ENCODE measurements at regions of chr18 and their contacts with region 1.

Region 1: DNA sequence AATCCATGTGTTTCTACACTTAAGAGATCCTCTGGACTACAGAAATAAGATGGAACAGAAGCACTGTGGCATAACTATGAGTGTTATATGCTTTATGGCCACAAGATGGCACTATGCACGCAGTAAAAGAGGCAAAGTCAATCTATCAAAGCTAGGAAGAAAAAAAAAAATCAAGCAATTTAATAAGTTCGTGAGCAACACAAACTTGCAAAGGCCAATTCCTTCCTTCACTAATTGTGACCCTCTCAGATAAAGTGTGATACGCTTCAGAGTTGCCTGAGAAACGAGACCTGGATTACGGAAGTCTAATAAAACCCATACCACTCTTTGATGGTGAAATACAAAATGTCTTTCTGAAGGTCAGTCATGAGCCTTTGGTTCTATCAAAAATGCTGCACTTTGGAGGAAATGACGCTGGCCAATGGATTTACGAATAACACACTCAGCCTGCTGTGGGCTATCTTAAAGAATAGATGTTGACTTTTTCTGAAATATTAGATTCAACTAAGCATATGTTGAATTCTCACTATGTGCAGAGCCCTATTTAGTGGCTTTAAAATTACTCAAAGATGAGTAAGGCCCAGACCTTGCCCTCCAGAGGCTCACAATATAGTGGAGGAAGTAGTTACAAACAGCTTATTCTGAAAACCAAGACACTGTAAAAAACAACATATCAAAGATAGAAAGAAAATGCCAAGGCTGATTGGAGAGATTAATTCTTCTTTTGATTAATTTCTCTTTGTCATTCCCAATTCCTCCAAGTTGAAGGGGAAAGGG is 35.5 kb upstream of the TTR start:
- DNase-seq: peak; percentile 14 to 23
- H3K4me3 ChIP-seq: no peak overlapping the region
- H3K27ac ChIP-seq: no peak overlapping the region
- H3K4me1 ChIP-seq: no peaks in the 10 kb centered on the region
- H3K27me3 ChIP-seq: no peaks in the 10 kb centered on the region
- CTCF ChIP-seq: peak; percentile 50 to 89 (median 71)
- POLR2A ChIP-seq: no peak

Region 2: GRCh38 chr18:31490387-31490786 is 65.8 kb before region 1 on chr18:
- intact Hi-C with region 1: no loop called
- DNase-seq: no peak
- H3K4me3 ChIP-seq: no peak overlapping the region
- H3K27ac ChIP-seq: no peak overlapping the region
- H3K4me1 ChIP-seq: no peaks in the 10 kb centered on the region
- H3K27me3 ChIP-seq: no peaks in the 10 kb centered on the region
- CTCF ChIP-seq: no peak
- POLR2A ChIP-seq: no peak

Region 3: DNA sequence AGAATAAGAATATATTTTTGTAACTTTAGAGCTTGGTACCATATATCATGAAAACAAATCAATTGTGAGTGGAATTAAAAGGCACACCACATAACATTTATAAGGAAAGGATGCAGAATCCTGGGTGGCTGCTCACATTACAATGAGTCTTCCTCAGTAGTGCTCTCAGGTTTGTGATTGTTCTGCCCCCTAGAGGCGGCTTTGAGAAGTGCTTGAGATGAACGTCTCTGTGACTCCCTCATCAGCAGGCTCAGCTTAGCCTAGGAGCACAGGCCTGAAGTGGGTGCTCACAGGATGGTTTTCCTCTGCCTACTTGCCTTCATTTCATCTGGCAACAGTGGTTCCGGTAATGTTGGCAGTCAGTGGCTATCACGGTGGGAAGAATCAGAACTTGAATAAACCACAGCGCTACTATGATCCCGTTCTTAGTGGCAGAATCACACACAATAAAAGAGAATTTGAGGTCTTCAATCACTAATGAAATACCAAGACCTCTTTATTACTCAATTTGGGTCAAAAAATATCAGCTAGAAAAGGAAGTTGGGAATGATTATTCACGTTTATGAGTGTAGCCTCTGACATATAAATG is 166.3 kb after region 1 on chr18:
- intact Hi-C with region 1: loop called (anchors 10 kb)
- DNase-seq: peak; percentile 80 to 84
- H3K4me3 ChIP-seq: no peak overlapping the region
- H3K27ac ChIP-seq: no peak overlapping the region
- H3K4me1 ChIP-seq: peaks cover 0 to 4% of the 10 kb centered on the region in 2 donors
- H3K27me3 ChIP-seq: no peaks in the 10 kb centered on the region
- CTCF ChIP-seq: peak; percentile 60 to 83 (median 68)
- POLR2A ChIP-seq: no peak

Region 4: DNA sequence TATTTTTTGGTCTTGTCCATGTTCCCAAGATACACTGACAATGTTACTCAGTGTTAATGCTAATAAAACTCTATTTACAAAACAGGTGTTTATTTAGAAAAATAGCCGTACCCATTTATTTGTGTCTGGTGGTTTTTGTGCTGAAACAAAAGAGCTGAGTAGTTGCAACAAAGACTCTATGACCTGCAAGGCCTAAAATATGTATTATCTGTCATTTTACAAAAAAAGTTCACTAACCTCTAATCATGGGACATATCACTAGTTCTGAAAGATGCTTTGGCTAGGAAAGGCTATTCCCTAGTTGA is 263.7 kb after region 1 on chr18:
- intact Hi-C with region 1: loop called (anchors 10 kb)
- DNase-seq: no peak
- H3K4me3 ChIP-seq: no peak overlapping the region
- H3K27ac ChIP-seq: no peak overlapping the region
- H3K4me1 ChIP-seq: no peaks in the 10 kb centered on the region
- H3K27me3 ChIP-seq: no peaks in the 10 kb centered on the region
- CTCF ChIP-seq: no peak
- POLR2A ChIP-seq: no peak

Region 5: GRCh38 chr18:31835528-31836133 is 279.5 kb after region 1 on chr18:
- intact Hi-C with region 1: no loop called
- DNase-seq: no peak
- H3K4me3 ChIP-seq: no peak overlapping the region
- H3K27ac ChIP-seq: no peak overlapping the region
- H3K4me1 ChIP-seq: no peaks in the 10 kb centered on the region
- H3K27me3 ChIP-seq: no peaks in the 10 kb centered on the region
- CTCF ChIP-seq: no peak
- POLR2A ChIP-seq: no peak

Region 6: DNA sequence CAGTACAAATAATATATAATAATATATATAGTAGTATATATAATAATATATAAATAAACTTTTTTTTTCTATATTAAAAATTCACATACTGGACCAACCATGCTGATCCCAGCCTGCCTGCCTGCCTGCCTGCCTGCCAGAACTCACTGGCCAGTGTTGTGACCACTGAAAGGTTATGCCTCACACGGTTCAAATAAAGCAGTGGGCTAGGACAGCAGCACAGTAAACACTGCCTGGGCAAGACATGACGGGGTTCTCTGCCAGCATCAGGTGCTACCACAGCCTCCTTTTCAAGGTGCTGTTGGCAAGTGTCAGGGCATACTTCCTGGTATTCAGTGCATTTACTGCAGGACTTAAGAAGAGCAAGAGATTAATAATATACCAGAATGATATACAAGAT is 319.1 kb after region 1 on chr18:
- intact Hi-C with region 1: no loop called
- DNase-seq: no peak
- H3K4me3 ChIP-seq: no peak overlapping the region
- H3K27ac ChIP-seq: no peak overlapping the region
- H3K4me1 ChIP-seq: no peaks in the 10 kb centered on the region
- H3K27me3 ChIP-seq: no peaks in the 10 kb centered on the region
- CTCF ChIP-seq: no peak
- POLR2A ChIP-seq: no peak

Region 7: DNA sequence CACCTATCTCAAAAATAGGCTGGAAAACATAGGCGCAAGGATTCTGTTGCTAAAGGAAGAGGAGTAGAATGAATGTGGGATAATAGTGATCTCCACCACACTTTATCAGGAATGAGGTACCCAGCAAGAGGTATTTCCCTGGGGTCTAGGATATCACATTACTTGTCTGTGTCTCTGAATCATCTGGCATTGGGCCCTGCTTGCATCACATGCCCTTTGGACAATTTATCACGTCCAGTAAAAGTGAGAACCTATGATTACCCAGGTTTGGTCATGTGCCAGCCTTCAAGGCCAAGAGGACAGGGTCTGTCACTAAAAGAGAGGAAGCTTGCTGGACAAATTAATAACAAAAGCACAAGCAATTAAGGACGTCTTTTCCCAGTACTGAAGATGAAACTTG is 398.2 kb after region 1 on chr18:
- intact Hi-C with region 1: no loop called
- DNase-seq: no peak
- H3K4me3 ChIP-seq: no peak overlapping the region
- H3K27ac ChIP-seq: no peak overlapping the region
- H3K4me1 ChIP-seq: no peaks in the 10 kb centered on the region
- H3K27me3 ChIP-seq: no peaks in the 10 kb centered on the region
- CTCF ChIP-seq: no peak
- POLR2A ChIP-seq: no peak

Region 8: GRCh38 chr18:31977270-31977872 is 421.2 kb after region 1 on chr18:
- intact Hi-C with region 1: loop called (anchors 10 kb)
- DNase-seq: peak; percentile 19 to 47
- H3K4me3 ChIP-seq: no peak overlapping the region
- H3K27ac ChIP-seq: no peak overlapping the region
- H3K4me1 ChIP-seq: no peaks in the 10 kb centered on the region
- H3K27me3 ChIP-seq: no peaks in the 10 kb centered on the region
- CTCF ChIP-seq: peak; percentile 40 to 80 (median 73)
- POLR2A ChIP-seq: no peak

Measured in thyroid gland (tissue), 4 donors.